Heart right ventricle (tissue), 16 donors: ENCODE measurements at regions of chr18 and their contacts with region 1.

Region 1: DNA sequence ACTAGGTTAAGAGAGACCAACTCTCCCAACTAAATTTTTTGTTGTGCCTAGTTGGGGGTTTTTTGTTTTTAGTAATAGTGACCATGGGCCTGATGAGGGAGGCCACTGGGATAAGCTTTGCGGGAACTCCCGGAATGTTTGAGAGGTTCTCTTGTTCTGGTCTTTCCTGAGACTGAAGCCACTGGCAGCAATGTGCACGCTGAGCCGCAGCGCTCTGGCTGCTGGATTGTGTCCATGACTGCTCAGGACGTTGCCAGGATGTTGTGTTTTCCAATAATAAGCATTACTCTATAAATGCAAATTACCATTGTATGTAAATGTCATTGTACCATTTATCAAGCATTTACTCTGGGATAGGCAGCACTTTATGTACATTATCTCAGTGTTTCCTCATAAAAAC is 126.1 kb downstream of the GALNT1 start:
- DNase-seq: peak; percentile 12 to 28
- ATAC-seq: peak in 6 of 8 donors; percentile 46 to 84 (median 74)
- H3K4me3 ChIP-seq: no peak overlapping the region
- H3K27ac ChIP-seq: peak overlapping the region in 1 of 10 donors; percentile 4
- H3K4me1 ChIP-seq: peaks cover 0 to 23% (median 13%) of the 10 kb centered on the region in 9 donors
- H3K27me3 ChIP-seq: no peaks in the 10 kb centered on the region
- CTCF ChIP-seq: no peak

Region 2: DNA sequence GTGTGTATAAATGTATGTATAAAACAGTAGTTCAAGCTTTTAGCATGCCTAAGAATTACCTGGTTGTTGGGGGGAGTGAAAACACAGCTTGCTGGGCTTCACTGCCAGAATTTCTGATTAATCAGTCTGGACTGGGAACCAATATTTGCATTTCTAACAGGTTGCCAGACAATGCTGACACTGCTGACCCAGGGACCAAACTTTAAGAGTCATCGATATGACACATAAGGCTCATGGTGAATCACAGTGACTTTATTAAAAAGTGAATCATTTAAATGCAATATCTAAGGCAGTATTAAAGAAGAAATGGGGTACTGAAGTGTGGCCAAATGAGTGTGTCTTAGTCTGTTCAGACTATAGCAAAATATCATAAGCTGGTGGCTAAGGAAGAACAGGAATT is 1193.4 kb before region 1 on chr18:
- intact Hi-C with region 1: loop called in 1 of 10 experiments (anchors 5 kb)
- DNase-seq: no peak
- ATAC-seq: no peak
- H3K4me3 ChIP-seq: no peak overlapping the region
- H3K27ac ChIP-seq: no peak overlapping the region
- H3K4me1 ChIP-seq: peaks cover 0 to 30% (median 14%) of the 10 kb centered on the region in 9 donors
- H3K27me3 ChIP-seq: no peaks in the 10 kb centered on the region
- CTCF ChIP-seq: no peak